Brain microvascular endothelial cell (primary cell): ENCODE measurements at regions of chr17 and their contacts with region 1.

Region 1: DNA sequence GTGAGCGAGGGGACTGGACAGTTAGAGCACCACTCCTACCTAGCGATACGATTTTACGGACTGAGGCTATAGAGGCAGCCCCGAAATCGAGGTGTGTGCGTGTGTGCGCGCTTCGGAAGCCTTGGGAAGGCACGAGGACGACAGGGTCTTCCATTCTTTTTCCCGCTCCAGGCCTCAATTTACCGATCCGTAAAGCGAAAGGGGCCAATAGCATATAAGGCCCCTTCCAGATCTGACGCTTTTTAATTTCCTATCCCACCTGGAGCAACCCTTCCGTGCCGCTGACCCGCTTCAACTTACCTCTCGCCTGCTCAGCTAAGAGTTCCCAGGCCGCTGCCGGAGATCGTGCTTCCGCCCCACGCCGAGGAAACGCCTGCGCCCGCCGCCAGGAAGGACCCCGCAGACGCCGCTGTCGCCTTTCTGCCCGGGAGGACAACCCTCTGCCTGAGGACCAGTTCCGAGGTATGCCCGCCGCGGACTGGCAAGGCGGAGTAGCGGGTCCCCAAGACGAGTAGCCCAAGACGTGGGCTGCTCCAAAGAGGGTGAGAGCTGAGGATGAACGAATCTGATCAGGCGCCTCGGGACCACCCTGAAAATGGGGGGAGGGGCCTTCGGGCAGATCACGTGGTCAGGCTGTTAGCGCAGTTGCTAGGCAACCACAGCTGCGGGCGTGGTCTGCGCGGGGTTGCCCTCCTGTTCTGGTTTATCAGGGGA is at the start of gene EFTUD2:
- DNase-seq: peak; percentile 81
- H3K4me3 ChIP-seq: peak within 1 kb of the TSS; percentile 94
- H3K27ac ChIP-seq: peak within 1 kb of the TSS; percentile 100
- H3K27me3 ChIP-seq: no peaks in the 10 kb centered on the region
- CTCF ChIP-seq: no peak

Region 2: GRCh38 chr17:44775136-44775837 is 123.9 kb before region 1 on chr17:
- in situ Hi-C with region 1: loop called (anchors 25 kb)
- DNase-seq: peak; percentile 96
- H3K4me3 ChIP-seq: peak overlapping the region; percentile 66
- H3K27ac ChIP-seq: no peak overlapping the region
- H3K27me3 ChIP-seq: no peaks in the 10 kb centered on the region
- CTCF ChIP-seq: no peak